ENCODE measurements at regions of chr9 and their contacts with region 1.

Region 1: GRCh38 chr9:5566054-5566618 is 55.8 kb downstream of the PDCD1LG2 start:
- DNase-seq: no peak
- ATAC-seq: no peak
- H3K4me3 Mint-ChIP-seq: no peak overlapping the region
- H3K27ac Mint-ChIP-seq: no peak overlapping the region
- H3K4me1 Mint-ChIP-seq: peaks cover 36% of the 10 kb centered on the region
- H3K27me3 Mint-ChIP-seq: no peaks in the 10 kb centered on the region

Region 2: DNA sequence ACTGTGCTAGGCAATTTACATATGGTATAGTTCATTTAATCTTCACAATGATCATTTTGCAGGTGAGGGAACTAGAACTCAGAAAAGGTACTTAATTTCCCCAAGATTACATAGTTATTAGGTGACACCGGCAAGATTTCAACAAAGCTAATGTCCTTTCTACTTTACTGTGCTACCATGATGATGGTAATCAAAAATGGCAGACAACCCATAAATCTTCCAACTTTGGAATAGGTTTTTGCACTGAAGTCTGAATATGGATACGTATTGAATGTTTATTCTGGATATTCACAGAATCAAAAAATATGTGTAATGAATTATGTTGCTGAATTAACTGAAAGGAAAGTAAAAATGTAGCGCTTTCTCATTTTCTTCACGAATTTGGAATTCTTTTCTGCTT is 42.0 kb before region 1 on chr9:
- CTCF ChIA-PET with region 1: no interaction called
- POLR2A ChIA-PET with region 1: no interaction called
- intact Hi-C with region 1: loop called in 1 of 2 experiments (anchors 5 kb)
- DNase-seq: no peak
- ATAC-seq: no peak
- H3K4me3 Mint-ChIP-seq: no peak overlapping the region
- H3K27ac Mint-ChIP-seq: no peak overlapping the region
- H3K4me1 Mint-ChIP-seq: peaks cover 7% of the 10 kb centered on the region
- H3K27me3 Mint-ChIP-seq: no peaks in the 10 kb centered on the region

Region 3: GRCh38 chr9:5578018-5578697 is 12.0 kb after region 1 on chr9:
- CTCF ChIA-PET with region 1: no interaction called
- POLR2A ChIA-PET with region 1: no interaction called
- intact Hi-C with region 1: no loop called
- DNase-seq: no peak
- ATAC-seq: peak; percentile 48
- H3K4me3 Mint-ChIP-seq: no peak overlapping the region
- H3K27ac Mint-ChIP-seq: peak overlapping the region; percentile 23
- H3K4me1 Mint-ChIP-seq: peaks cover 46% of the 10 kb centered on the region
- H3K27me3 Mint-ChIP-seq: no peaks in the 10 kb centered on the region

Measured in activated CD4-positive, alpha-beta T cell treated with anti-CD3 and anti-CD28 coated beads for 36 hours (primary cell).